ENCODE measurements at regions of chr5 and their contacts with region 1.

Region 1: GRCh38 chr5:37370864-37371726 is at the start of gene NUP155:
- DNase-seq: peak; percentile 94
- H3K4me3 ChIP-seq: peak within 1 kb of the TSS; percentile 72 to 82
- H3K27ac ChIP-seq: peak within 1 kb of the TSS; percentile 73 to 75
- H3K4me1 ChIP-seq: peaks cover 8% of the 10 kb centered on the region
- H3K27me3 ChIP-seq: no peaks in the 10 kb centered on the region
- CTCF ChIP-seq: peak in 3 of 4 experiments; percentile 7 to 36 (median 28)
- POLR2A ChIP-seq: no peak
- total RNA-seq, gene NUP155: 24.1 to 33.7 TPM

Region 2: GRCh38 chr5:37248970-37249686 is 122.0 kb before region 1 on chr5 and contains the start of gene CPLANE1:
- intact Hi-C with region 1: loop called (anchors 5 kb)
- DNase-seq: peak; percentile 55
- H3K4me3 ChIP-seq: peak within 1 kb of the TSS; percentile 68 to 78
- H3K27ac ChIP-seq: peak within 1 kb of the TSS; percentile 85 to 89
- H3K4me1 ChIP-seq: peaks cover 5% of the 10 kb centered on the region
- H3K27me3 ChIP-seq: no peaks in the 10 kb centered on the region
- CTCF ChIP-seq: peak in 1 of 4 experiments; percentile 4
- POLR2A ChIP-seq: peak; percentile 48
- total RNA-seq, gene CPLANE1: 17.2 to 27.8 TPM

Measured in prostate gland (tissue), 2 donors.